ENCODE measurements at regions of chr1 and their contacts with region 1.

Region 1: GRCh38 chr1:155648551-155649147 is 38.6 kb downstream of the MSTO1 start:
- DNase-seq: peak; percentile 87
- H3K4me3 ChIP-seq: no peak overlapping the region
- H3K27ac ChIP-seq: no peak overlapping the region
- H3K4me1 ChIP-seq: peaks cover 7% of the 10 kb centered on the region
- H3K27me3 ChIP-seq: no peaks in the 10 kb centered on the region
- CTCF ChIP-seq: peak; percentile 44 to 53
- POLR2A ChIP-seq: no peak

Region 2: DNA sequence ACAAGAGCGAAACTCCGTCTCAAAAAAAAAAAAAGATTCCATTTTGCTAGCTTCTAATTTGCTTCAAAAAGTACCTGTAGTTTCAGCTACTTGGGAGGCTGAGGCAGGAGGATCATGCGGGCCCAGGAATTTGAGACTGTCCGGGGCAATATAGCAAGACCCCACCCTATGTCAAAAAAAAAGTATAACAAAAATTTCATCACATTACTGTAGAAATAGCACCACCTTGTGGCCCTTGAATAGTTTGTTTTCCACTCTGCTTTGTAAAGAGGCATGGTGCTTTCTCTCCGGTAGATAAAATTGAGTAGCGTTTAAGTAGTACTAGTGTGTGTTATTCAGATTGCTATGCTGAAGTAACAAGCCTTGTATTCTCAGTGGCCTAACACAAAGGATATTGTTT is 56.9 kb before region 1 on chr1:
- CTCF ChIA-PET with region 1: interaction called, 8 read pairs
- POLR2A ChIA-PET with region 1: no interaction called
- dilution Hi-C with region 1: no loop called
- intact Hi-C with region 1: loop called (anchors 5 kb)
- DNase-seq: peak; percentile 65
- H3K4me3 ChIP-seq: no peak overlapping the region
- H3K27ac ChIP-seq: no peak overlapping the region
- H3K4me1 ChIP-seq: no peaks in the 10 kb centered on the region
- H3K27me3 ChIP-seq: no peaks in the 10 kb centered on the region
- CTCF ChIP-seq: peak; percentile 20 to 28
- POLR2A ChIP-seq: no peak

Region 3: GRCh38 chr1:155678027-155678426 is 29.4 kb after region 1 on chr1:
- CTCF ChIA-PET with region 1: no interaction called
- POLR2A ChIA-PET with region 1: interaction called, 10 read pairs
- dilution Hi-C with region 1: no loop called
- intact Hi-C with region 1: no loop called
- DNase-seq: no peak
- H3K4me3 ChIP-seq: no peak overlapping the region
- H3K27ac ChIP-seq: no peak overlapping the region
- H3K4me1 ChIP-seq: no peaks in the 10 kb centered on the region
- H3K27me3 ChIP-seq: no peaks in the 10 kb centered on the region
- CTCF ChIP-seq: no peak
- POLR2A ChIP-seq: no peak